Transverse colon (tissue), 4 donors: ENCODE measurements at regions of chr2 and their contacts with region 1.

Region 1: GRCh38 chr2:4272261-4272858 is 569.0 kb downstream of the DCDC2C start:
- DNase-seq: no peak
- H3K4me3 ChIP-seq: no peak overlapping the region
- H3K27ac ChIP-seq: no peak overlapping the region
- H3K4me1 ChIP-seq: no peaks in the 10 kb centered on the region
- H3K27me3 ChIP-seq: no peaks in the 10 kb centered on the region
- CTCF ChIP-seq: no peak
- EP300 ChIP-seq: no peak
- POLR2A ChIP-seq: no peak

Region 2: GRCh38 chr2:3830796-3831195 is 441.6 kb before region 1 on chr2:
- in situ Hi-C with region 1: no loop called
- intact Hi-C with region 1: loop called (anchors 5 kb)
- DNase-seq: no peak
- H3K4me3 ChIP-seq: no peak overlapping the region
- H3K27ac ChIP-seq: no peak overlapping the region
- H3K4me1 ChIP-seq: no peaks in the 10 kb centered on the region
- H3K27me3 ChIP-seq: no peaks in the 10 kb centered on the region
- CTCF ChIP-seq: no peak
- EP300 ChIP-seq: no peak
- POLR2A ChIP-seq: no peak